OCI-LY7 (cell line): ENCODE measurements at regions of chr4 and their contacts with region 1.

Region 1: GRCh38 chr4:3771939-3772495 is 5.8 kb downstream of the ADRA2C start:
- DNase-seq: no peak
- H3K4me3 ChIP-seq: no peak overlapping the region
- H3K27ac ChIP-seq: no peak overlapping the region
- H3K4me1 ChIP-seq: peaks cover 40% of the 10 kb centered on the region
- CTCF ChIP-seq: no peak

Region 2: GRCh38 chr4:3486541-3487535 is 285.2 kb before region 1 on chr4:
- CTCF ChIA-PET with region 1: no interaction called
- POLR2A ChIA-PET with region 1: no interaction called
- intact Hi-C with region 1: loop called (anchors 1 kb)
- DNase-seq: peak; percentile 63
- H3K4me3 ChIP-seq: no peak overlapping the region
- H3K27ac ChIP-seq: no peak overlapping the region
- H3K4me1 ChIP-seq: peaks cover 31% of the 10 kb centered on the region
- CTCF ChIP-seq: no peak